Activated CD4-positive, alpha-beta memory T cell treated with anti-CD3 and anti-CD28 coated beads for 36 hours (primary cell): ENCODE measurements at regions of chr12 and their contacts with region 1.

Region 1: DNA sequence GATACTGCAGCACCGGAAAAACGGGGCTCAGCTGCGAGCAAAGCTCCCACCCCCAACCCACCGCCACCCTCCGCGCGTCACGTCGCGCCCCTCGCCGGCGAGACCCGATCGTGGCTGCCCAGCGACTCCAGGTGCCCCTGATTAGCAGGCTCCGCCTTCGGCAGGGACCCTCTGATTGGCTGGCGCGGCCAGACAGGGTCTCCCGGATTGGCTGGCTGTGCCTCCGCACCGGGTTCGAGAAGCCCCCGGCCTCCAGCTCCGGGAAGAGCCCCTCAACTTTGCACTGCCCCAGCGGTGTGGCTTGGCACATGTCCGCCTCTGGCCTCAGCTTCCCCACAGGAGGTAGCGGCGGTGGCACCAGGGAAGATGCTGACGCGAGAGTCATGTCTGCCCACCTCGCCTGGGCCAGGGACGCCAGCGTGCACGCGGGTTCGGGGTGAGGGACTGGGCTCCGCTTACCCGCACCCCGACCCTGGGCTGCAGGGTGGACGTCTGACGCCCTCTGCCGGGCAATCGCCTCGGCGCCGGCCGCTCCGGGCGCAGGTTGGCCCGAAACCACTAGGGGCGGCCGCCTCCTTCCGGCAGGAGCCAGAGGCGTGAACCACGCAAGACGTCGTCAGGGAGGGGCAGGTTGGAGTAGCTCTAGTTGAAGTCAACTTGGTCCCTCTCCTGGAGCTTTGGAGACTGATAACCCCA is 498 bp upstream of the RHOF start:
- DNase-seq: peak; percentile 98
- H3K4me3 Mint-ChIP-seq: peak overlapping the region; percentile 88
- H3K27ac Mint-ChIP-seq: peak overlapping the region; percentile 94
- H3K4me1 Mint-ChIP-seq: peaks cover 58% of the 10 kb centered on the region
- H3K27me3 Mint-ChIP-seq: no peaks in the 10 kb centered on the region

Region 2: DNA sequence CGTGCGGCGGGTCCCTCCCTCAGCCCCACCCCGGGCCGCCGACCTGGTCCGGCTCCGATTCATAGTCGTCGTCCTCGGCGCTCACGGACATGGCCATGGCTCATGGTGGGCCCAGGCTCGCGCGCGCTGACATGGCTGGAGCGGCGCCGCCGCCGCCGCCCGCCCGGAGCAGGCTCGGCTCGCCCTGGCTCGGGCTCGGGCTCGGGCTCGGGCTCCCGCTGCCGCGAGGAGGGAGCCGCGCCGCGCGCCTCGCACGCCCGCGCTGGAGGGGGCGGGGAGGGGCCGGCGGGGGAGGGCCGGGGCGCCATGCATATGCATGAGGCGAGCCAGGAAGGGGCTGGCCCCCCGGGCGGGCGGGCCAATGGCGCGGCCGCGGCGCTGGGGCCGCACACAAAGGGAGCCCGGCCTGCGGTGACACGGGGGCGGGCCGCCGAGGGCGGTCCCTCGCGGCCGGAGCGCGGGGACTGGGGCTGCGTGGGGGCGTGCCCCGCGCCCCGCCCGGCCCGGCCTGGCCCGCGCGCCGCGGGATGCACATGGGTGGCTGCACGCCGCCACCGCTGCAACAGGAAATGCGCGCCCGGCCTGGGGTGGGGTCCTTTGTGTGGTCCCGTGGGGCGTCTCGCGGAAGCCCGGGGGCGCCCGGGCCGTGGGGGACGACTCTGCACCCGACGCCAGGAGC is 326.7 kb before region 1 on chr12:
- CTCF ChIA-PET with region 1: no interaction called
- POLR2A ChIA-PET with region 1: no interaction called
- intact Hi-C with region 1: loop called (anchors 10 kb)
- DNase-seq: peak; percentile 91
- H3K4me3 Mint-ChIP-seq: peak overlapping the region; percentile 29
- H3K27ac Mint-ChIP-seq: peak overlapping the region; percentile 13
- H3K4me1 Mint-ChIP-seq: peaks cover 19% of the 10 kb centered on the region
- H3K27me3 Mint-ChIP-seq: no peaks in the 10 kb centered on the region

Region 3: GRCh38 chr12:121688966-121689365 is 105.0 kb before region 1 on chr12:
- CTCF ChIA-PET with region 1: interaction called, 67 read pairs
- POLR2A ChIA-PET with region 1: interaction called, 4 read pairs
- intact Hi-C with region 1: no loop called
- DNase-seq: no peak
- H3K4me3 Mint-ChIP-seq: no peak overlapping the region
- H3K27ac Mint-ChIP-seq: no peak overlapping the region
- H3K4me1 Mint-ChIP-seq: peaks cover 6% of the 10 kb centered on the region
- H3K27me3 Mint-ChIP-seq: no peaks in the 10 kb centered on the region

Region 4: DNA sequence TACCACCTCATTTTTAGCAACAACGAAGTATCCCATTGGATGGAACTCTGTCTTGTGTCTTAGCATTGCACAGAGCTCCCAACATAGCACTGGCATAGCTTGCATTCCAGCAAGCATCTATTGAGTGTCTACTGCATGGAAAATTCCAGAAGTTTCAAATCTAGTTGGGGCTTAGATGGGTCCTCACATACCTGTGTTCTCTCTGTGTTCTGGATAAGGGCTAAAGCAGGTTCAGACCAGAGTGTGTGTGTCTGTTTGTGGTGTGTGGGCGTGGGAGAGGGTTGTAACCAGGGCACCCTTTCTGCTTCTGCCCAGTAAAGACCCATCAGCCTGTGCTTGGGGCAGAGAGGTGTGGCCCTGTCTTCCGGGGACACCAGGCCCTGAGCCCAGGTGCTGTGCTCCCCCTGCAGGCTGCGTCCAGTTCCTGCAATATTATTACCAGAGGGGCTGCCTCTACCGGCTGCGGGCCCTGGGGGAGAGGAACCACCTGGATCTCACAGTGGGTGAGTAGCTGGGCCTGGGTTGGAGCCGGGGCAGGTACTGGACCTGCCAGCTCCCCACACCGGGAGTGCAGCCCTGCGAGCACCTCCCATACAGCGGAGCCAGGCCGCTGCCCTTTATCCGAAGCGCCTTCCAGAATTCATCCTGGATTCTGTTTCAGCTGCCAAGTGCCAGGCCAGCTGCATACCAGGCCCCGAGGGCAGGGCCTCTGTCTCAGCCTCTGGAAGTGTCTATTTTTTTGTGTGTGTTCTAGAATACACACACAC is 20.8 kb before region 1 on chr12:
- CTCF ChIA-PET with region 1: interaction called, 417 read pairs
- POLR2A ChIA-PET with region 1: interaction called, 13 read pairs
- intact Hi-C with region 1: loop called (anchors 1 kb)
- DNase-seq: peak; percentile 87
- H3K4me3 Mint-ChIP-seq: no peak overlapping the region
- H3K27ac Mint-ChIP-seq: peak overlapping the region; percentile 54
- H3K4me1 Mint-ChIP-seq: peaks cover 8% of the 10 kb centered on the region
- H3K27me3 Mint-ChIP-seq: no peaks in the 10 kb centered on the region

Region 5: DNA sequence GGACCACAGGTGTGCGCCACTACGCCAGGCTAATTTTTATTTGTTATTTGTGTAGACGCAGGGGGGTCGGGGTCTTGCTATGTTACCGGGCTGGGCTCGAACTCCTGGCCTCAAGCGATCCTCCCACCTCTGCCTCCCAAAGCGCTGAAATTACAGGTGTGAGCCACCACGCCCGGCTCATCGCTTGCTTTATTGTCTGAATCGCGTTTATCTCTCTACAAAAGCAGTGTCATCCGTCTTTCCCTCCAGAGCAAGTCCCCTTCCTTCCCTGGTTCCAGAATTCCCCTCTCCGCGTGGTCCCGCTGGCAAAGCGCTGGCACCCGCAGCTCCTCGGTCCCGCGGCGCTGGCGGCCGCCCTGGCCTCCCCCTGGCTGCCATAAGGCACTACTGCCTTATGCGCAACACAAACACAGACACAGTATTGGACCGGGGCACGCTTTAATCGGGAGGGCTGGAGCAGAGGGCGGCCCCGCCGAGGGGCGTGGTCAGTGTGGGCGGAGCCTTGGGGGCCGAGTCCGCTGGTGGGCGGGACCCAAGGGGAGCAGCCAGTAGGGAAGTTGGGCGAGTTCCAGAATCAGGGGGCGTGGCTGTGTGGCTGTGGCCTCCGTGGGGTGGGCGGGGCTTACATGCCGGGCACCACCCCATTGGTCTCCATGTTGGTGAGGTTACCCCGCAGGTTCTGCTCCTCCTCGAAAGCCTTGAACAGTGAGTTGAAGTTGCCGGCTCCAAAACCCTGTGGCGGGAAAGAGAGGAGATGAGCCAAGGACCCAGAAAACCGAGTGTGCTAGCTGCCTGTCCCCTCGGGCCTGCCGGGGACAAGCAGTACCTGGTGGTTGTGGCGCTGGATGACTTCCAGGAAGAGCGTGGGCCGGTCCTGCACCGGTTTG is 45.4 kb after region 1 on chr12:
- CTCF ChIA-PET with region 1: interaction called, 21 read pairs
- POLR2A ChIA-PET with region 1: no interaction called
- intact Hi-C with region 1: loop called (anchors 2 kb)
- DNase-seq: peak; percentile 100
- H3K4me3 Mint-ChIP-seq: peak overlapping the region; percentile 99
- H3K27ac Mint-ChIP-seq: peak overlapping the region; percentile 92
- H3K4me1 Mint-ChIP-seq: peaks cover 15% of the 10 kb centered on the region
- H3K27me3 Mint-ChIP-seq: no peaks in the 10 kb centered on the region

Region 6: DNA sequence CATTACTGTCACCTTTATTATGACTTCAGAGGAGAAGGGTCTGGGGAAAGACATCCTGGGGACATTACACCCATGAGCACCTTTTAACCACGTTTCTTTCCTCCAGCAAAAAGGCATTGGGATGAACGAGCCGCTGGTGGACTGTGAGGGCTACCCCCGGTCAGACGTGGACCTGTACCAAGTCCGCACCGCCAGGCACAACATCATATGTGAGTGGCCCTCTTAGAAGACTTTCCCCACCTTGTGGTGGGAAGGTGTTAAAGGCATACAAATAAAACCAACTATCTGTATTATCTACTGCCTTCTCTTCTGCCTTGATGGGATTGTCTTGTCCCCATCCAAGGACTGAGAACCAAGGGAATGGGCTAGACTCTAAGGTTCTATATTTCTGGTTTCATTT is 100.6 kb after region 1 on chr12:
- CTCF ChIA-PET with region 1: interaction called, 117 read pairs
- POLR2A ChIA-PET with region 1: interaction called, 3 read pairs
- intact Hi-C with region 1: no loop called
- DNase-seq: no peak
- H3K4me3 Mint-ChIP-seq: no peak overlapping the region
- H3K27ac Mint-ChIP-seq: peak overlapping the region; percentile 71
- H3K4me1 Mint-ChIP-seq: peaks cover 39% of the 10 kb centered on the region
- H3K27me3 Mint-ChIP-seq: no peaks in the 10 kb centered on the region

Region 7: DNA sequence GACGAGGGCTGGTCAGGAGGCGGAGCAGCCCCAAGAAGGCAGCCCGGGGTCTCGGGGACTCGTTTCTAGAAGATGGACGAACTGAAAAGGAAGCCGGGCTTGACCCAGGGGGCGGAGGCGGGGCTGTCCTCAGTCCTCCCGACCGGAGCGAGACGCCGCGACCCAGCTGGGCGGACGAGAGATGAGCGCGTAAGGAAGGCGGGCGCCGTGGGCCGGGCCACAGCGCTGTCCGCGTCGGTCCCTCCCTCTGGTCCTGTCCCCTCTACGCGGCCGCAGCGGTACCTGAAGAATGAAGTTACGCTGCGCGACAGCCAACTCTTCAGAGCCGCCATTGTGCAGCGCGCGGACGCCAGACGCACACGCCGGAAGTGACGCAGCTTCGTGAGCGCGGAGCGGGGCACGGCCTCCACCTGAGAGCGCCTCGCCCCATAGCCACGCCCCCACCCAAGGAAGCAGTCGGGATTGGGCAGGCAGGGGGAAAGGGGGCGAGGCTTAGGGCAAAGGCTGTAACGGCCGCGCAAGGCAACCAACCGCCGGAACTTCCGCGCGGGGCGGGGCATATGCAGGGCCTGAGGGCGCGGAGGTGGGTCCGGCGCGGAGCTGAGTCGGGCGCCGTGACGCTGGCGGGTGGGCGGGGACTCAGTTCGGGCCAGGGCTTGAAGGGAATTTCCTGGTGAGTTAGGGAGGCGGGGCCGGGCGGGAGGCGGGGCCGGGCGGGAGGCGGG is 431.9 kb after region 1 on chr12 and contains the start of gene DIABLO:
- CTCF ChIA-PET with region 1: no interaction called
- POLR2A ChIA-PET with region 1: no interaction called
- intact Hi-C with region 1: loop called (anchors 10 kb)
- DNase-seq: peak; percentile 100
- H3K4me3 Mint-ChIP-seq: peak within 1 kb of the TSS; percentile 85
- H3K27ac Mint-ChIP-seq: peak within 1 kb of the TSS; percentile 82
- H3K4me1 Mint-ChIP-seq: peaks cover 43% of the 10 kb centered on the region
- H3K27me3 Mint-ChIP-seq: no peaks in the 10 kb centered on the region
- total RNA-seq, gene DIABLO: 51.8 to 52.0 TPM

Region 8: DNA sequence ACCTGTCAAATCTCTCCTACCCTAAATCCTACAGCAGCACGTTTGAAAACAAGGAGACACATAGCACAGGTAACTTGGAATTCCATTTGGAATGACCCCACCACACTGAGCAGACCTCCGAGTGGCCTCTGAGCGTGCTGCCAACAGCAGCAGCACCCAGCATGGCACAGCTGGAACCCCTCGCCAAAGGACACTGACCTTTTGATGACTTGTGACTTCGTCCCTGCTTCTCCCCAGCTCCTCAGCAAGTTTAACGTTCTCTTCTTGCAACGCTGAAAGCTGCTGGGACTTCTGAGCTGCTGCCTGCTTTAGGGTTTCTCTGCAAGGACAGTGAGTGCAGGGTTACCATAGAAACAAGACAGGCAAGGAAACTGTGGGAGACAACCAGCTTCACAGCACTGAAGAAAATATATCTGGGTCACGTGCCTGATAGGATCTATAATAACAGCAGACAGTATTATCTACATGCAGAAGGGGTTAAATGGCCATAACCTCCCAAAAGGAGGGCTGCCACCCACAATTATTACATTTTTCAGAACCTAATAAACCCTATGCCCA is 515.7 kb after region 1 on chr12:
- CTCF ChIA-PET with region 1: no interaction called
- POLR2A ChIA-PET with region 1: no interaction called
- intact Hi-C with region 1: no loop called
- DNase-seq: no peak
- H3K4me3 Mint-ChIP-seq: no peak overlapping the region
- H3K27ac Mint-ChIP-seq: no peak overlapping the region
- H3K4me1 Mint-ChIP-seq: no peaks in the 10 kb centered on the region
- H3K27me3 Mint-ChIP-seq: no peaks in the 10 kb centered on the region